Panc1 (cell line): ENCODE measurements at regions of chr17 and their contacts with region 1.

Region 1: DNA sequence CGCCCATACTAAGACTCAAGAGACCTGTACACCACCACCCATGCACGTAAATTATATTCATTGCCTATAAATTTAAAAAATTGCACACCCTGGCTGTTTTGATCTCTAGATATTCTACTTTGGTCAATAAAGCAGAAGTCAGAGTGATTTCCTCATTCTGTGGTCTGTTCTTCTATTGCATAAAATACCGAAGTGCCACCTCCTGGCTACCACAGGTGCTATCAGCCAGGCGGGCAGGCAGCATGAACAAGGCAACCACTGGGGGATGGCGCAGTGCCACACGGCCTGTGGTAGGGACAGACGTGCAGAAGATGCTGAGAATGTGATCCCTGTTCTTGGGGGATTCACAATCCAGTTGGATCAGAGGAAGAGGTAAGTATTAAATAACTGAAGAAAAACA is 122.3 kb downstream of the CDK5R1 start:
- DNase-seq: peak; percentile 4
- ATAC-seq: peak; percentile 83; the same call in 1 of the 2 replicates
- H3K4me3 ChIP-seq: no peak overlapping the region
- H3K27ac ChIP-seq: no peak overlapping the region
- H3K4me1 ChIP-seq: no peaks in the 10 kb centered on the region
- H3K27me3 ChIP-seq: no peaks in the 10 kb centered on the region
- CTCF ChIP-seq: peak; percentile 31

Region 2: GRCh38 chr17:32495359-32496231 is 113.5 kb before region 1 on chr17:
- CTCF ChIA-PET with region 1: interaction called, 6 read pairs
- POLR2A ChIA-PET with region 1: no interaction called
- in situ Hi-C with region 1: no loop called
- intact Hi-C with region 1: loop called (anchors 10 kb)
- DNase-seq: no peak
- ATAC-seq: peak; percentile 27
- H3K4me3 ChIP-seq: no peak overlapping the region
- H3K27ac ChIP-seq: no peak overlapping the region
- H3K4me1 ChIP-seq: no peaks in the 10 kb centered on the region
- H3K27me3 ChIP-seq: no peaks in the 10 kb centered on the region
- CTCF ChIP-seq: no peak

Region 3: GRCh38 chr17:32515677-32516383 is 93.3 kb before region 1 on chr17:
- CTCF ChIA-PET with region 1: no interaction called
- POLR2A ChIA-PET with region 1: no interaction called
- in situ Hi-C with region 1: no loop called
- intact Hi-C with region 1: no loop called
- DNase-seq: no peak
- ATAC-seq: no peak
- H3K4me3 ChIP-seq: no peak overlapping the region
- H3K27ac ChIP-seq: no peak overlapping the region
- H3K4me1 ChIP-seq: peaks cover 8% of the 10 kb centered on the region; the same call in 1 of the 2 replicates
- H3K27me3 ChIP-seq: peaks cover 9% of the 10 kb centered on the region
- CTCF ChIP-seq: no peak

Region 4: DNA sequence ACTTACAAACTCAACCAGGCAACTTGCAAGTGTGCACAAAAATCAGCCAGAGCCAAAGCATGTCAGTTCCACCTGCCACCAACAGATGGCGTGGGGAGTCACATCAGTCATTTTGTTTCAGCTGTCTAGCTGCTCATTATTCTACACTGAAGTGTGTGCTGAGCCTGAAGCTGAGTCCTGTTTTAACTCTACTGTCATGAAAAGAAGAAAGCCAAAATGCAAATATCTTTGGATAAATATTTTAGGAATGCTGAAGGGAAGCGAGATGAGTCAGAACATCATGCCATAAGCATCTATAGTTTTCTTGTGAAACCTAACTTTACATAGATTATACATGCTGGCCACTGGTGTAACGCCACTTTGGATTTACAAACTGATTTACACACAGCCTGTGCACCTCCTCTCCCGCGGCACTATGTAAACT is 50.3 kb after region 1 on chr17:
- CTCF ChIA-PET with region 1: no interaction called
- POLR2A ChIA-PET with region 1: no interaction called
- in situ Hi-C with region 1: no loop called
- intact Hi-C with region 1: no loop called
- DNase-seq: peak; percentile 79
- ATAC-seq: peak; percentile 94
- H3K4me3 ChIP-seq: no peak overlapping the region
- H3K27ac ChIP-seq: no peak overlapping the region
- H3K4me1 ChIP-seq: no peaks in the 10 kb centered on the region
- H3K27me3 ChIP-seq: peaks cover 9% of the 10 kb centered on the region
- CTCF ChIP-seq: peak; percentile 96

Region 5: GRCh38 chr17:32671896-32672295 is 62.8 kb after region 1 on chr17:
- CTCF ChIA-PET with region 1: no interaction called
- POLR2A ChIA-PET with region 1: no interaction called
- in situ Hi-C with region 1: no loop called
- intact Hi-C with region 1: no loop called
- DNase-seq: no peak
- ATAC-seq: no peak
- H3K4me3 ChIP-seq: no peak overlapping the region
- H3K27ac ChIP-seq: no peak overlapping the region
- H3K4me1 ChIP-seq: no peaks in the 10 kb centered on the region
- H3K27me3 ChIP-seq: peaks cover 6% of the 10 kb centered on the region
- CTCF ChIP-seq: no peak

Region 6: DNA sequence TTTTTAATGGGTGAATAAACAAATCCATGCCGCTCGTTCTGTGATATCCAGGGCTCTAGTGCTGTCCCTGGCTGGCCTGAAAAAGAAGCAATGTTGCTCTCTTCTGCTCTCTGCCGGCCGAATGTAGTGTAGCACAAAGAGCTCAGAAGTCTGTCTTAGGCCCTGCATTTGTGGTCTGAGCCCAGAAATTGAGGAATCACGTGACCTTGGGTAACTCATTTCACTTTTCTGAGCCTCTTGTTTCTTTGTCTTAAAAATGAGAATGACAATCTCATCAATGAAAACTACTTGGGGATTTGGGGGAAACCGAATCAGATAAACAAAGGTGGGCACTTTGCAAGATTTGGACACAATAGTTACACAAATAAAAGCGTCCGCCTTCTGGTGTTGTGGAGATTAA is 1065.6 kb after region 1 on chr17:
- CTCF ChIA-PET with region 1: no interaction called
- POLR2A ChIA-PET with region 1: no interaction called
- in situ Hi-C with region 1: no loop called
- intact Hi-C with region 1: no loop called
- DNase-seq: peak; percentile 47
- ATAC-seq: peak; percentile 98
- H3K4me3 ChIP-seq: no peak overlapping the region
- H3K27ac ChIP-seq: no peak overlapping the region
- H3K4me1 ChIP-seq: no peaks in the 10 kb centered on the region
- H3K27me3 ChIP-seq: 0 out of 2 replicates have a peak, but pooled peaks cover 2% of the 10 kb centered on the region
- CTCF ChIP-seq: peak; percentile 89